CD8-positive, alpha-beta T cell (primary cell): ENCODE measurements at regions of chr10 and their contacts with region 1.

Region 1: GRCh38 chr10:32315424-32315823 is 31.5 kb downstream of the EPC1 start:
- DNase-seq: no peak
- ATAC-seq: no peak
- H3K4me3 ChIP-seq: no peak overlapping the region
- H3K4me3 Mint-ChIP-seq: no peak overlapping the region
- H3K27ac ChIP-seq: no peak overlapping the region
- H3K27ac Mint-ChIP-seq: peak overlapping the region; percentile 71
- H3K4me1 ChIP-seq: peaks cover 65% of the 10 kb centered on the region
- H3K4me1 Mint-ChIP-seq: peaks cover 82% of the 10 kb centered on the region
- H3K27me3 ChIP-seq: no peaks in the 10 kb centered on the region
- H3K27me3 Mint-ChIP-seq: no peaks in the 10 kb centered on the region
- CTCF ChIP-seq: no peak

Region 2: DNA sequence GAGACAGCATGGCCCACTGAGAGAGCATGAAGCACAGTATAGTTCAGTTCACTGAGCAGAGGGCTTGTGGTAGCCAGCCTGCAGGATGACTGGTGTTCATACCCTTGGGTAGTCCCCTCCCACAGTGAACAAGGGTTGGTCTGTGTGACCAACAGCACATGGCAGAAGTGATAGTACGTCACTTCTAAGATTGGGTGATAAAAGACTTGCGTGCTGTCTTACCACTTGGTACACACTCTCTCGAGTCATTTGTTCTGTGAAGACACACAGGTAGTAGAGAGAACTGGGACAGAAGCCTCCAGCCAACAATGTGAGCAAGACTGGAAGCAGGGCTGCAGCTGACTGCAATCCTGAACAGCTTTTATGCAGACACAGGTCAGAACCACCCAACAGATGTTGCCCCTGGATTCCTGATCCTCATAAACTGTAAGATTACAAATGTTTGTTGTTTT is 16.9 kb after region 1 on chr10:
- CTCF ChIA-PET with region 1: interaction called, 3 read pairs
- POLR2A ChIA-PET with region 1: interaction called, 6 read pairs
- intact Hi-C with region 1: loop called in 1 of 2 experiments (anchors 2 kb)
- DNase-seq: peak; percentile 32 to 92 (median 69)
- ATAC-seq: peak; percentile 96
- H3K4me3 ChIP-seq: no peak overlapping the region
- H3K4me3 Mint-ChIP-seq: peak overlapping the region; percentile 73
- H3K27ac ChIP-seq: peak overlapping the region; percentile 12 to 55
- H3K27ac Mint-ChIP-seq: peak overlapping the region; percentile 90
- H3K4me1 ChIP-seq: peaks cover 91% of the 10 kb centered on the region
- H3K4me1 Mint-ChIP-seq: peaks cover 94% of the 10 kb centered on the region
- H3K27me3 ChIP-seq: no peaks in the 10 kb centered on the region
- H3K27me3 Mint-ChIP-seq: no peaks in the 10 kb centered on the region
- CTCF ChIP-seq: no peak